ENCODE measurements at regions of chr2 and their contacts with region 1.

Region 1: GRCh38 chr2:37052600-37053332 is 31.4 kb downstream of the HEATR5B start:
- DNase-seq: no peak
- ATAC-seq: no peak

Region 2: GRCh38 chr2:36889795-36890194 is 163.0 kb before region 1 on chr2:
- intact Hi-C with region 1: loop called (anchors 10 kb)
- DNase-seq: no peak
- ATAC-seq: no peak

Region 3: DNA sequence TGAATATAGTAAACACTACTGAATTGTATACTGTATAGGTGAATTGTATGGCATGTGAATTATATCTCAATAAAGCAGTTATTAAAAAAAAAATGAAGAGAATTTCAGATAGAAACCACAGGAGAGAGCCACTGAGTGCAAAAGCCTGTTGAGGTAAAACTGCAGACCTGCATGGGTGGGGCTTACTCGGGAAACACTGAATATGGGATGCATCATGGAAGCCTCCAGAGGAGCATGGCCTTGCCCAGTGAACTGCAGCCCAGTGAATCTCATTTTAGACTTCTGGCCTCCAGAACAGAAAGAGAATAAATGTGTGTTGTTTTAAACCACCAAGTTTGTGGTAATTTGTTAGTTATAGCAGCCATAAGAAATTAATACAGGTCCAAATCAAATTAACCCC is 47.3 kb after region 1 on chr2:
- intact Hi-C with region 1: no loop called
- DNase-seq: no peak
- ATAC-seq: no peak

Measured in Right ventricle myocardium inferior (tissue), 1 donor.